ENCODE measurements at regions of chr12 and their contacts with region 1.

Region 1: GRCh38 chr12:105382771-105383622 is 52.5 kb downstream of the C12orf75 start:
- DNase-seq: peak; percentile 39
- H3K4me3 ChIP-seq: no peak overlapping the region
- H3K27me3 ChIP-seq: no peaks in the 10 kb centered on the region
- CTCF ChIP-seq: peak; percentile 67

Region 2: GRCh38 chr12:105229371-105229770 is 153.6 kb before region 1 on chr12:
- CTCF ChIA-PET with region 1: interaction called, 15 read pairs
- POLR2A ChIA-PET with region 1: no interaction called
- DNase-seq: no peak
- H3K4me3 ChIP-seq: no peak overlapping the region
- H3K27me3 ChIP-seq: no peaks in the 10 kb centered on the region
- CTCF ChIP-seq: no peak

Measured in BJ (cell line).